ENCODE measurements at regions of chr18 and their contacts with region 1.

Region 1: DNA sequence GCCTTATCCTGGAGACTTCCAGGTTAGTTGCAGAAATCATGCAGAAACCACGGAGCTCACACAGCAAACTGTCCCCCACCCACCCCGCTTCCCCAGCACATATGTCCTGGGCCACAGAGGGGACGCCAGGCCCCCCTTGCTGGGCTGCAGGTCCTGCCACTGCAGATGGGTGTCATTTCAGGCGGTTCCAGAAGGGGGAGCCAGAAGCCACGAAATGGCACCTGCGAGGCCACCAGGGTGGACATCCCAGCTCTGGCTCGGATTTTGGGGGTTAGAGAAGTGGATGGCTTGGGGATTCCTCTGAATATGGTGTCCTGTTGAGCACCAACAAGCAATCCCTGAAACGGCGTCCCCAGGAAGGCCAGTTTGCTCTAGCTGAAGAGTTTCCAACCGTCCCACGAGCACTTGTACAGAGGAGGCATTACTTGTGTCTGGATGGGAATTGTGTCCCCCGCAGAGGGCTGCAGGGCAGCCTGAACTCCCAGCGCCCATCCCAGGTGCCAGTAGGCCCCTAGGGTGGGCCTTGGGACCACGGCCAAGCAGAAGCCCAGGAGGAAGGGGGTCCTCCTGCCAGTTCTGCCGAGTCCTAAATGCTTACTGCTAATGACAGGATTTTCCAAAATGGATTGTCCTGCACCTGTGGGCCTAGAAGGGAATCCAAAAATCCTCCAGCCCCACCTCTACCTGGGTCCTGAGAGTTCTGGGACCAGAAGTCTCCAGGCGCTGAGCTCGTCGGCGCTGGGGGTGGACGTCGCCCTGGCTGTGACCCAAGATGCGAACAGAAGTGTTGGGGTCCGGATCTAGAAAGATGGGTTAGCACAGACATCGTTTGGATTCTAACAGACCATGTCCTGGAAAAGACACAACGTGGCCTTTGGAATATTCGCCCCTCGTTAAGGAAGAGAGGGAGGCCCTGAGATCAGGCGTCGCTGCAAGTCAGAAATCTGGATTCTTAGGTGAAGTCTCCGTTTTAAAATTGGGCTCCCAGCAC is 14.6 kb upstream of the NFATC1 start:
- DNase-seq: peak; percentile 31 to 93
- H3K4me3 ChIP-seq: no peak overlapping the region
- CTCF ChIP-seq: peak in 1 of 3 donors; percentile 42
- POLR2A ChIP-seq: no peak

Region 2: GRCh38 chr18:79528846-79529245 is 147.7 kb after region 1 on chr18:
- intact Hi-C with region 1: loop called (anchors 5 kb)
- DNase-seq: peak in 1 of 2 donors; percentile 64
- H3K4me3 ChIP-seq: no peak overlapping the region
- CTCF ChIP-seq: peak in 1 of 3 donors; percentile 70
- POLR2A ChIP-seq: no peak

Region 3: DNA sequence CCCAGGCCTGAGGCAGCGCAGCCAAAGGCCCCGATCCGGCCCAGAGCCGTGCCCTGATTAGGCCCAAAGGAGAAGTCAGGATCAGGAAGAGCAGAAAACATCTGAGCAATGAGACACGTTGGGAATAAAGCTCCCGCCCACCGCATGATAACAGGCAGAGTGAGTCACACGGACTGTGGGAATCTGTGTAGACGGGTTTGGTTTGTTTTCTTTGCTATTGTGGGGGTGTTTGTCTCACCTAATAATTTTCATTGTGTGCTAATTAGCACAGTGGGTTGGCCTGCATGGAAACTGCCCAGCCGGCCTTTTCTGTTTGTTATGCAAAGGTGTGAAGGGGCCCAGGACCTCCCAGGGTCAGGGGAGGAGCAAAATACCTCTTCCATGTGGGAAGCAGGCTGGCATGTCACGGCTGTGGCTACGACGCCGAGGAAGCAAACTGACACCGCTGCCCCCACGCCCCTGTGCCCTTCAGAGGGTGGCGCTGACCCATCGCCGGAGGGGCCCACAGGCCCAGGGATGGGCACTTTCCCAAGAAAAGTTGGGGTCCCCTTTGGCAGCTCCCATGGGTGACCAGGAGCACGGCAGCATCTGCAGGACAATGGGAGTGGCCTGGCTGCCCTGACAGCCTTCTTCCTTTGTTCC is 230.1 kb after region 1 on chr18:
- intact Hi-C with region 1: no loop called
- DNase-seq: peak in 1 of 2 donors; percentile 84
- H3K4me3 ChIP-seq: no peak overlapping the region
- CTCF ChIP-seq: no peak
- POLR2A ChIP-seq: no peak

Region 4: DNA sequence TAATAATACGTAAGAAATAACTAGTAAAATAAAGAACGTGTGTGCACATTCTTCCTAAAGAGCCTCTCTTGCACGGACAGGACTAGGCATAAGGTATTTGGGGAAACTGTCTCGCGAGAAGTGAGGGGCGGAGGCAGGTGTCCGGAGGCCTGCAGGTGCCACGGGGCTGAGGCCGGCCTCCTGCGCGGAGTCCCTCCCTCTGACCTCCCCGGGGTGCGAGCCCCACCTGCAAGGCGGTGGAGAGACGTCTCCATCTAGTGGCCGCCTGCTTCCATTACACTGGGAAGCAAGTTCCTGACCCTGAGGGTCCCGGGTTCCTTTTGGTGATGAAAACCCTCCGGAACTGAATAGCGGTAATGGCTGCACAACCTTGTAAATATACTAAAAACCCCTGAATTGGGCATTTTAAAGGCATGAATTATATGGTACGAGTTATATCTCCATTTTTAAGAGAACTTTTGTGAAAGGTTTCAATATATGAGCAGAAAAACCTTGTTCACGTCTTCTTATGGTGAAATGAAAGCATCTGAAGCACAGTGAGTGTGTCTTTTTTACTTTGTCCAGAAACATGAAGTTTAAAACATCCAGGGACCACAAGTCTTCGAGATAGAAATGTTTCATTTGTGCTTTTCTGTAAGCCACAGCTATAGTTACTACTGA is 263.0 kb after region 1 on chr18:
- intact Hi-C with region 1: loop called (anchors 5 kb)
- DNase-seq: no peak
- H3K4me3 ChIP-seq: no peak overlapping the region
- CTCF ChIP-seq: peak in 2 of 3 donors; percentile 45 to 56
- POLR2A ChIP-seq: no peak